ENCODE measurements at regions of chr10 and their contacts with region 1.

Region 1: DNA sequence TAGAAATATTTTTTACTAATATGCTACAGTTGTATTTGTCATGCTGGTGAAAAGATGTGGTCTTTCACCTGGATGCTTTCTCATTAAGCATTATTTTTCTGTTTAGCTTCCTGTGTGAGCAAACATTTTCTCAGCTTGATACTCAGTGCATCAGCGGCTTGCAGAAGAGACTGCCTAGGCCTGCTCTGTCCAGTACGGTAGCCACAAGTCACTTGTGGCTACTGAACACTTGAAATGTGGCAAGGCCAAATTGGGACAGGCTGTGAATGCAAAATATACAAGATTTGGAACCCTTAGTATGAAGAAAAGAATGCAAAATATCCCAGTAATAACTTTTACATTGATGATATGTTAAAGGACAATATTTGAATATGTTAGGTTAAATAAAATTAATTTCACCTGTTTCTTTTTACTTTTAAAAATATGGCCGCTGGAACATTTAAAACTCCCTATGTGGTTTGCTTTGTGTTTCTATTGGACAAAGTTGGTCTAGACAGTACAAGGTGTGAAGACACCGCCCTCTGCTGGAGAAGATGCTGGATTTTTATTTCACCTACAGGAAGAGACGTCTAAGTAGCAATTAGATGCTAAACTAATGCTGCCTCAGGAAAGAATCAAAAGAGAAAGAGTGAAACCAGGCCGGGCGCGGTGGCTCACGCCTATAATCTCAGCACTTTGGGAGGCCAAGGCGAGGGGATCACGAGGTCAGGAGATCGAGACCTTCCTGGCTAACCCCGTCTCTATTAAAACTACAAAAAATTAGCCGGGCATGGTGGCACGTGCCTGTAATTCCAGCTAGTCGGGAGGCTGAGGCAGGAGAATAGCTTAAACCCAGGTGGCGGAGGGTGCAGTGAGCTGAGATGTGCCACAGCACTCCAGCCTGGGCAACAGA is 5.3 kb downstream of the SRGN start:
- DNase-seq: peak; percentile 87
- H3K4me3 ChIP-seq: no peak overlapping the region
- H3K27ac ChIP-seq: no peak overlapping the region
- H3K4me1 ChIP-seq: no peaks in the 10 kb centered on the region
- H3K27me3 ChIP-seq: no peaks in the 10 kb centered on the region
- CTCF ChIP-seq: peak; percentile 83

Region 2: DNA sequence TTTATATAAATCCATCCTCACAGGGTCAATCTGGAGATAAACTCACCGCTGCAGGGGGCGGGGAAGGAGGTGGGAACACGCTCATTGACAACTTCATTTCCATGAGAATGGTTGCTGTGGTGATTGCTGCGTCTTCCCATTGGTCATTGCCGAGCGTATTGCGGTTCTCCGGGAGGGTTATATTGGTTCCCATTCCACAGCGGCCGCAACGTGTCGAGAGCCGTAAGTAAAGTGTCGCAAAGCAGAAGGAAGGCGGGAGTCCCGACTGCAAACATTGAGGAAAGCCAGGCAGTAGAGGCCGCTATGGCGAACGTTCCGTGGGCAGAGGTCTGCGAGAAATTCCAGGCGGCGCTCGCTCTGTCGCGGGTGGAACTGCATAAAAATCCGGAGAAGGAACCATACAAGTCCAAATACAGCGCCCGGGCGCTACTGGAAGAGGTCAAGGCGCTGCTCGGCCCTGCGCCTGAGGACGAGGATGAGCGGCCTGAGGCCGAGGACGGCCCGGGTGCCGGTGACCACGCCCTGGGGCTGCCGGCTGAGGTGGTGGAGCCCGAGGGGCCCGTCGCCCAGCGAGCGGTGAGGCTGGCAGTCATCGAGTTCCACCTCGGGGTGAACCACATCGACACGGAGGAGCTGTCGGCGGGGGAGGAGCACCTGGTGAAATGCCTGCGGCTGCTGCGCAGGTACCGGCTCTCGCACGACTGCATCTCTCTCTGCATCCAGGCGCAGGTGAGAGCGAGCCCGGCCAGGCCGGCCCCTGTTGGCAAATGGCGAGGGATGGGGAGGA is 104.5 kb before region 1 on chr10 and contains the start of gene KIFBP:
- CTCF ChIA-PET with region 1: no interaction called
- POLR2A ChIA-PET with region 1: no interaction called
- intact Hi-C with region 1: loop called (anchors 1 kb)
- DNase-seq: peak; percentile 99
- H3K4me3 ChIP-seq: peak within 1 kb of the TSS; percentile 79
- H3K27ac ChIP-seq: peak within 1 kb of the TSS; percentile 78
- H3K4me1 ChIP-seq: peaks cover 8% of the 10 kb centered on the region
- H3K27me3 ChIP-seq: no peaks in the 10 kb centered on the region
- CTCF ChIP-seq: peak; percentile 65
- total RNA-seq, gene KIFBP: 40.5 and 42.8 TPM in 2 replicates

Region 3: GRCh38 chr10:69004821-69005220 is 88.4 kb before region 1 on chr10:
- CTCF ChIA-PET with region 1: no interaction called
- POLR2A ChIA-PET with region 1: no interaction called
- intact Hi-C with region 1: loop called (anchors 5 kb)
- DNase-seq: peak; percentile 18
- H3K4me3 ChIP-seq: no peak overlapping the region
- H3K27ac ChIP-seq: no peak overlapping the region
- H3K4me1 ChIP-seq: no peaks in the 10 kb centered on the region
- H3K27me3 ChIP-seq: no peaks in the 10 kb centered on the region
- CTCF ChIP-seq: peak; percentile 42

Region 4: GRCh38 chr10:69065406-69066361 is 27.5 kb before region 1 on chr10:
- CTCF ChIA-PET with region 1: no interaction called
- POLR2A ChIA-PET with region 1: no interaction called
- intact Hi-C with region 1: no loop called
- DNase-seq: no peak
- H3K4me3 ChIP-seq: no peak overlapping the region
- H3K27ac ChIP-seq: no peak overlapping the region
- H3K4me1 ChIP-seq: no peaks in the 10 kb centered on the region
- H3K27me3 ChIP-seq: no peaks in the 10 kb centered on the region
- CTCF ChIP-seq: no peak

Region 5: DNA sequence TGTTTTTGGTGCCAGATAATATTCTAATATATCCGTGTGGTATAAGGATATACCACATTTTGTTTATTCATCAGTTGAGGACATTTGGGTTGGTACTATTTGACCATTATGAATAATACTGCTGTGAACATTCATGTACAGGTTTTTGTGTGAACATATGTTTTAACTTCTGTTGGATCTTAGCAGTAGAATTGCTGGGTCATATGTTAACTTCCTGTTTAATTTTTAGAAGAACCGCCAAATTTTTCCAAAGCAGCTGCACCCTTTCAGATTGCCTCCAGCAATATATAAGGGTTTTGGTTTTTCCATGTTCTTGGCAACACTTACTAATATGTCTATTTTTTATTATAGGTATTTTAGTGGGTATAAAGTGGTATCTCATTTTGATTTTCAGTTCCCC is 53.6 kb after region 1 on chr10:
- CTCF ChIA-PET with region 1: no interaction called
- POLR2A ChIA-PET with region 1: no interaction called
- intact Hi-C with region 1: no loop called
- DNase-seq: no peak
- H3K4me3 ChIP-seq: no peak overlapping the region
- H3K27ac ChIP-seq: no peak overlapping the region
- H3K4me1 ChIP-seq: no peaks in the 10 kb centered on the region
- H3K27me3 ChIP-seq: no peaks in the 10 kb centered on the region
- CTCF ChIP-seq: no peak

Region 6: DNA sequence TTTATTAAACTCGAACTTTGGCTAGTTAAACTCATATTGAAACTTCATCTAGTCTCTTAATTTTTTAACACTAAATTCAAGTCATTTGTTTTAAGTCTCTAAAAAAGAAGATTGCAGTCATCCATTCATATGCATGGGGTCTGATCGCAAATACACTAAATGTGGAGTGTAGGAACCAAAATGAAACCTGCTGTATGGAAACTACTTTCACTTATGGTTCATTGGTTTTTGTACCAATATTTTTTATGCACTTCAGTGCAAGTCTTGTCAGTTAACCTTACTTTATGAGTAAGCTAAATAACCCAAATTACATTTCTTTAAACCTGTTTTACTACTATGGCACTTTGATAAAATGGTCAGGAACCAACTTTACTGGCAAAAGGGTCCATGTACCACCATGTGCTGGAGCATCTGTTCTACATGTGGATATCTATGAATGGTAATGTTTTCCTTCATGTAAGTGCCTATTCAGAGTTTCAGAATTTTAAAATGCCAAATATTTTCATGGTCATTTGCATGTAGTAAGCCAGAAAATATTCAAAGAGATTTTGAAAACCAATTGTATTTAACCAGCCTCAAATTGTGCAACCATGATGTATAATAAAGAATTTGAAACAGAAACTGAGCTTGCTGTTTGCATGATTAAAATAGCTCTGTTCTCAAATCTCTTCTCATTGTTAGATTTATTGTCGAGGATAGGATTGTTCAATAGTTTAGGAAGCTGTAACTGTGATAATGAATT is 79.2 kb after region 1 on chr10:
- CTCF ChIA-PET with region 1: no interaction called
- POLR2A ChIA-PET with region 1: no interaction called
- intact Hi-C with region 1: no loop called
- DNase-seq: no peak
- H3K4me3 ChIP-seq: no peak overlapping the region
- H3K27ac ChIP-seq: no peak overlapping the region
- H3K4me1 ChIP-seq: no peaks in the 10 kb centered on the region
- H3K27me3 ChIP-seq: no peaks in the 10 kb centered on the region
- CTCF ChIP-seq: no peak

Region 7: GRCh38 chr10:69392481-69393000 is 299.3 kb after region 1 on chr10:
- CTCF ChIA-PET with region 1: no interaction called
- POLR2A ChIA-PET with region 1: no interaction called
- intact Hi-C with region 1: loop called (anchors 10 kb)
- DNase-seq: peak; percentile 91
- H3K4me3 ChIP-seq: no peak overlapping the region
- H3K27ac ChIP-seq: no peak overlapping the region
- H3K4me1 ChIP-seq: peaks cover 24% of the 10 kb centered on the region
- H3K27me3 ChIP-seq: no peaks in the 10 kb centered on the region
- CTCF ChIP-seq: peak; percentile 92